ENCODE measurements at regions of chr1 and their contacts with region 1.

Region 1: DNA sequence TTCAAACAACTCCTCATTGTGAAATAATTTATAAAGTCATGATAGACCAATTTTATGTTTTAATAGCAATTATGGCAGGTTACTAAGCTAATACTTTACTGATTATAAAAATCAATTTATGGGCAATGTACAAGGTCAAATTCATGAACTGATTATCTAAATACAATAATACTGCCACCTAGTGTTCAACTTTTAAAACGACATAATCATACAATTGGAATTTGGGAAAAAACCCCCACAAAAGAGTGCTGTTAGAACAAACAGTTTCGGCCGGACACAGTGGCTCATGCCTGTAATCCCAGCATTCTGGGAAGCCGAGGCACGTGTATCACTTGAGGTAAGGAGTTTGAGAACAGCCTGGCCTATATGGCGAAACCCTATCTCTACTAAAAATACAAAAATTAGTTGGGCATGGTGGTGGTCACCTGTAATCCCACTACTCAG is 14.0 kb downstream of the GTF2B start:
- DNase-seq: peak in 1 of 35 experiments; percentile 33
- ATAC-seq: no peak
- H3K4me3 ChIP-seq: no peak overlapping the region
- H3K4me3 Mint-ChIP-seq: no peak overlapping the region
- H3K27ac ChIP-seq: no peak overlapping the region
- H3K27ac Mint-ChIP-seq: no peak overlapping the region
- H3K4me1 ChIP-seq: peaks cover 5 to 16% of the 10 kb centered on the region in 2 experiments
- H3K4me1 Mint-ChIP-seq: peaks cover 56 to 62% (median 58%) of the 10 kb centered on the region in 3 donors
- H3K27me3 ChIP-seq: no peaks in the 10 kb centered on the region
- H3K27me3 Mint-ChIP-seq: no peaks in the 10 kb centered on the region

Region 2: DNA sequence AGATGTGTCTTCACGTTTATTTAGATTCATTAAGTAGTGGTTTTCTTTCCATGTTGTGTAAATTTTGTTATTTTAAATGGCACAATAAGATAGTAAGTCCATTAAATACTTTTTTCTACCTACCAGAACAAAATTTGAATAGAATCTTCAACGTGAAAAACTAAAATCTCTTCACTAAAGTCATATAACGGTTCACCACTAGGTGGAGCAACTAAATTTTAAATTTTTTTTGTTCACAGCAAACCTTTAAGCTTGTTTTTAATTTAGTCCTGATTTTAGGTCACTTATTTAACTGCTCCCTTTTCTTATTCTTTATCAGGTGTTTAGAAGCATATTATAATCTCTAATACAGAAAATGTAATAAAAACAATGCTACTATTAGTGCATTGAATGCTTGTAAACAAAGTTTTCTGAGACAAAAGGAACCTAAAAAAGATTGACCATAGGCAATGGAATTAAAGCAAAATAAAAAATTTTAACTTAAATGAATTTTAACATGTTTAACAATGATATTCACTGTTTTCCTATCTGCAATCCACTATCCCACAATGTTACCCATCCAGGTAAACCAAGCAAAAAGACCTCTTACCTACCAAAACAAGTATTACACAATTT is 221.6 kb before region 1 on chr1:
- CTCF ChIA-PET with region 1: interaction called, 11 to 27 read pairs
- POLR2A ChIA-PET with region 1: no interaction called
- DNase-seq: peak in 1 of 35 experiments; percentile 65
- ATAC-seq: no peak
- H3K4me3 ChIP-seq: no peak overlapping the region
- H3K4me3 Mint-ChIP-seq: no peak overlapping the region
- H3K27ac ChIP-seq: no peak overlapping the region
- H3K27ac Mint-ChIP-seq: no peak overlapping the region
- H3K4me1 ChIP-seq: peaks cover 0 to 6% of the 10 kb centered on the region in 2 experiments
- H3K4me1 Mint-ChIP-seq: peaks cover 11 to 14% (median 12%) of the 10 kb centered on the region in 3 donors
- H3K27me3 ChIP-seq: no peaks in the 10 kb centered on the region
- H3K27me3 Mint-ChIP-seq: no peaks in the 10 kb centered on the region

Region 3: DNA sequence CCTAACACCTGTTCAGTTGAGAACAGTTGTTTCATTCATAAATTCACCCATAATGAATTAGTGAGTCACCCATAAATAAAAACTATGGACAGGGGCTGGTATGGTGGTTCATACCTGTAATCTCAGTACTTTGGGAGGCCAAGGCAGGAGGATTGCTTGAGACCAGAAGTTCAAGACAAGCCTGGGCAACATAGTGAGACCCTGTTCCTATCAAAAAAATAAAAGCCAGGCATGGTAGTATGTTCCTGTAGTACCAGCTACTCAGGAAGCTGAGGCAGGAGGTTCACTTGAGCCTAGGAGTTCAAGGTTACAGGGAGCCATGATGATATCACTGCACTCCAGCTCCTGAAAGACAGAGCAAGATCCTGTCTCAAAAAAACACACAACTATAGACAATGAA is 65.0 kb before region 1 on chr1:
- CTCF ChIA-PET with region 1: no interaction called
- POLR2A ChIA-PET with region 1: interaction called in 1 of 2 experiments, 14 read pairs
- DNase-seq: no peak
- ATAC-seq: no peak
- H3K4me3 ChIP-seq: no peak overlapping the region
- H3K4me3 Mint-ChIP-seq: no peak overlapping the region
- H3K27ac ChIP-seq: no peak overlapping the region
- H3K27ac Mint-ChIP-seq: no peak overlapping the region
- H3K4me1 ChIP-seq: no peaks in the 10 kb centered on the region
- H3K4me1 Mint-ChIP-seq: no peaks in the 10 kb centered on the region
- H3K27me3 ChIP-seq: no peaks in the 10 kb centered on the region
- H3K27me3 Mint-ChIP-seq: no peaks in the 10 kb centered on the region

Region 4: GRCh38 chr1:88891318-88891950 is 14.0 kb after region 1 on chr1 and contains the start of gene GTF2B:
- CTCF ChIA-PET with region 1: interaction called, 20 to 59 read pairs
- POLR2A ChIA-PET with region 1: interaction called, 8 to 10 read pairs
- DNase-seq: peak; percentile 84 to 98 (median 93)
- ATAC-seq: peak; percentile 87 to 93 (median 90)
- H3K4me3 ChIP-seq: peak within 1 kb of the TSS; percentile 94 to 100
- H3K4me3 Mint-ChIP-seq: peak within 1 kb of the TSS; percentile 86 to 99 (median 97)
- H3K27ac ChIP-seq: peak within 1 kb of the TSS; percentile 86
- H3K27ac Mint-ChIP-seq: peak within 1 kb of the TSS; percentile 93 to 98
- H3K4me1 ChIP-seq: peaks cover 14 to 22% of the 10 kb centered on the region in 2 experiments
- H3K4me1 Mint-ChIP-seq: peaks cover 44 to 46% (median 45%) of the 10 kb centered on the region in 3 donors
- H3K27me3 ChIP-seq: no peaks in the 10 kb centered on the region
- H3K27me3 Mint-ChIP-seq: no peaks in the 10 kb centered on the region
- total RNA-seq, gene GTF2B: 34.2 to 54.5 (median 38.7) TPM

Measured in T-cell (primary cell).